Right ventricle myocardium superior (tissue), 1 donor: ENCODE measurements at regions of chr12 and their contacts with region 1.

Region 1: DNA sequence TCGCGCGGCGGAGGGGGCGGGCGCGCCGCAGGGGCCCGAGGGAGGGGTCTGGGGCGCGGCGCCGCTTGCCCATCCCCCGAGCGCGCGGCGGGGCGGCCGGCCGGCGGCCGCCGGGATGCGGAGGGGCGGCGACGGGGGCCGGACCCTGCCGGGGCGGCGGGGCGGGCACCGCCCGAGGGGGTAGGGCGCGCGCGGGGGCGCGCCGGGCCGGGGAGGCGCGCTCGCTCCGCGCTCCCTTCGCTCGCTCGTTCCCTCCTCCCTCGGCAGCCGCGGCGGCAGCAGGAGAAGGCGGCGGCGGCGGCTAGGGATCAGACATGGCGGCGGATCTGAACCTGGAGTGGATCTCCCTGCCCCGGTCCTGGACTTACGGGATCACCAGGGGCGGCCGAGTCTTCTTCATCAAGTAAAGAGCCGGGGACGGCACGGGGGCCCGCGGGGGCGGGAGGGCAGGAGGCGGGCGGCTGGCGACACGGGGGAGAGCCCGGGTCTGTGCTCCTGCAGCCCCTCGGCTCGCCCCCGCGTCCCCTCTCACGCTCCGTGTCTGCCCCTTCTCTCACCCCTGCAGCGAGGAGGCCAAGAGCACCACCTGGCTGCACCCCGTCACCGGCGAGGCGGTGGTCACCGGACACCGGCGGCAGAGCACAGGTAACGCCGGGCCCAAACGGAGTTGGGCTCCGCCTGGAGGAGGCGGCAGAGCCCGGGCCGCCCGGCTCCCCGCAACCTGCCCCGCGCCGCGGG is at the start of gene PLEKHA5:
- DNase-seq: peak; percentile 88
- ATAC-seq: peak; percentile 90
- total RNA-seq, gene PLEKHA5: 55.5 TPM

Region 2: DNA sequence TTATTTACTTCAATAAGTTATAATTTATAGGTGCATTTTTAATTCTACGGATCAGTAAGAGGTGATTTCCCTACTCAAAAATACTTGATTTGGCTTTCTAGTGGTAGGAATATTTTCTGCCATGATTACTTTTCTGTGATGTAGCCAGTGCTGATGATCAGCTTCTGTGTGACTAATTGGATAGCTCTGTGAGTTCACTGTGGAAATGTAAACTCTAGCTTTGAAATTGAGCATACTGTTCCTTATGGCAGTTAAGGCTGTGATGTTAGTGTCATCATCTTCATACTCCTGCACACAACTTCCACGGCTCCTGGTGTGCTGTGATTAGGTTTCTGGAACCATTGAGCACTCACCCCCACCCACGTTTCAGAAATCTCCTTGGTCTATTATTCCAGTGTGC is 48.1 kb after region 1 on chr12:
- intact Hi-C with region 1: loop called (anchors 5 kb)
- DNase-seq: no peak
- ATAC-seq: peak; percentile 16

Region 3: DNA sequence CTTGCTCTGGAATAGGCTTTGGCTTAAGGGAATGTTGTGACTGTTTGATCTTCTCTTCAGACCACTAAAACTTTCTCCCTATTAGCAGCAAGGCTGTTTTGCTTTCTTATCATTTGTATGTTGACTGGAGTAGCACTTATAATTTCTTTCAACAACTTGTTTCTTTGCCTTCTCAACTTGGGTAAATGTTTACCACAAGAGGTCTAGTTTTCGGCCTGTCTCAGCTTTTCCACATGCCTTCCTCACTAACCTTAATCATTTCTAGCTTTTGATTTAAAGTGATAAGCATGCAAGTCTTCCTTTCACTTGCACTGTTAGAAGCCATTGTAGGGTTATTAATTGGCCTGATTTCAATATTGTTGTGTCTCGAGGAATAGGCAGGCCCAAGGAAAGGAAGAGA is 183.0 kb after region 1 on chr12:
- intact Hi-C with region 1: no loop called
- DNase-seq: no peak
- ATAC-seq: no peak